ENCODE measurements at regions of chr1 and their contacts with region 1.

Region 1: GRCh38 chr1:205275133-205275532 is 46.4 kb downstream of the NUAK2 start:
- DNase-seq: no peak
- H3K4me3 ChIP-seq: no peak overlapping the region
- H3K27ac ChIP-seq: no peak overlapping the region
- H3K4me1 ChIP-seq: peaks cover 0 to 11% (median 4%) of the 10 kb centered on the region in 4 donors
- H3K27me3 ChIP-seq: no peaks in the 10 kb centered on the region
- CTCF ChIP-seq: no peak

Region 2: GRCh38 chr1:205211169-205211838 is 63.8 kb before region 1 on chr1 and contains the start of gene DSTYK:
- intact Hi-C with region 1: no loop called
- DNase-seq: peak; percentile 96 to 97
- H3K4me3 ChIP-seq: peak within 1 kb of the TSS; percentile 89 to 94
- H3K27ac ChIP-seq: peak within 1 kb of the TSS; percentile 90 to 95
- H3K4me1 ChIP-seq: peaks cover 0 to 27% (median 14%) of the 10 kb centered on the region in 4 donors
- H3K27me3 ChIP-seq: no peaks in the 10 kb centered on the region
- CTCF ChIP-seq: no peak

Region 3: GRCh38 chr1:205326812-205327466 is 51.8 kb after region 1 on chr1:
- intact Hi-C with region 1: loop called (anchors 2 kb)
- DNase-seq: no peak
- H3K4me3 ChIP-seq: no peak overlapping the region
- H3K27ac ChIP-seq: no peak overlapping the region
- H3K4me1 ChIP-seq: peaks cover 0 to under 1% (median 0%) of the 10 kb centered on the region in 4 donors
- H3K27me3 ChIP-seq: peaks cover 0 to 19% of the 10 kb centered on the region in 2 donors
- CTCF ChIP-seq: no peak